ENCODE measurements at regions of chr5 and their contacts with region 1.

Region 1: GRCh38 chr5:146151970-146152369 is 30.5 kb downstream of the LARS1 start:
- DNase-seq: peak in 1 of 2 experiments; percentile 46
- H3K4me3 ChIP-seq: no peak overlapping the region
- H3K27ac ChIP-seq: no peak overlapping the region
- H3K4me1 ChIP-seq: no peaks in the 10 kb centered on the region
- H3K27me3 ChIP-seq: no peaks in the 10 kb centered on the region
- CTCF ChIP-seq: no peak

Region 2: GRCh38 chr5:145951071-145951470 is 200.9 kb before region 1 on chr5:
- CTCF ChIA-PET with region 1: no interaction called
- POLR2A ChIA-PET with region 1: no interaction called
- intact Hi-C with region 1: no loop called
- DNase-seq: no peak
- H3K4me3 ChIP-seq: no peak overlapping the region
- H3K27ac ChIP-seq: no peak overlapping the region
- H3K4me1 ChIP-seq: peaks cover 20% of the 10 kb centered on the region
- H3K27me3 ChIP-seq: no peaks in the 10 kb centered on the region
- CTCF ChIP-seq: no peak

Region 3: DNA sequence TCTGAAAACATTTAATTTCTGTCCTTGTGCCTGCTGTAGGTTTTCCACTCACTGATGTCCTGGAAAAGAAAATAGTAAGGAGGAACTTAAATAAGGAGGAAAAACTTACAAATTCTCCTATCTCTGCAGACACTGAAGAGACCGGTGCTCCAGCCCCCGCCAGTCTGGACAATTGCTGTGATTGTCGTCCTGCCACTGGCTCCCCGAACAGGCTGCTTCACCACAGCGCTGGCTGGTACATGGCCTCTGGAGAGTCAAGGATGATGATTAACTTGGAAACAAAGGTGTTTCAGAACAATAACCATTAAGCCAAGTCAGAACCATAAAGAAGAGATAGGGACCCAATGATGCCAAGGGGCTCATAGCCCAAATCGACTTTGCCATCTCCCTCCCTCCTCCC is 53.9 kb before region 1 on chr5:
- CTCF ChIA-PET with region 1: no interaction called
- POLR2A ChIA-PET with region 1: no interaction called
- intact Hi-C with region 1: no loop called
- DNase-seq: no peak
- H3K4me3 ChIP-seq: no peak overlapping the region
- H3K27ac ChIP-seq: no peak overlapping the region
- H3K4me1 ChIP-seq: no peaks in the 10 kb centered on the region
- H3K27me3 ChIP-seq: no peaks in the 10 kb centered on the region
- CTCF ChIP-seq: no peak

Region 4: DNA sequence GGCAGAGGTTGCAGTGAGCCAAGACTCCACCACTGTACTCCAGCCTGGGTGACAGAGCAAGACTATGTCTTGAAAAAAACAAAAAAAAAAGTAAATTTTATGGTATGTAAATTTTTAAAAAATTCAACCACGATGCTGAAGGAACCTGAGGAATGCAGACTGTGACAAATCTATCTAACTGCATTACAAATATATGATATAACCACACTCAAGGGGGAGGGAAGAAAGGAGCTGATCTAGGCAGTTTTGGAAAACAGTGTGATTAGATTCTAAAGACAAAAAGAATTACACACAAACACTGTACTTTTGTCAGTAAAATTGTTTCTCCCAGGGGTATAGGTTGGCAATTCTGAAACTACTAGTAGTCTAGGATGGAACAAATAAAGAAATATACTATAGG is 13.5 kb after region 1 on chr5:
- CTCF ChIA-PET with region 1: no interaction called
- POLR2A ChIA-PET with region 1: no interaction called
- intact Hi-C with region 1: no loop called
- DNase-seq: no peak
- H3K4me3 ChIP-seq: no peak overlapping the region
- H3K27ac ChIP-seq: no peak overlapping the region
- H3K4me1 ChIP-seq: no peaks in the 10 kb centered on the region
- H3K27me3 ChIP-seq: no peaks in the 10 kb centered on the region
- CTCF ChIP-seq: no peak

Region 5: DNA sequence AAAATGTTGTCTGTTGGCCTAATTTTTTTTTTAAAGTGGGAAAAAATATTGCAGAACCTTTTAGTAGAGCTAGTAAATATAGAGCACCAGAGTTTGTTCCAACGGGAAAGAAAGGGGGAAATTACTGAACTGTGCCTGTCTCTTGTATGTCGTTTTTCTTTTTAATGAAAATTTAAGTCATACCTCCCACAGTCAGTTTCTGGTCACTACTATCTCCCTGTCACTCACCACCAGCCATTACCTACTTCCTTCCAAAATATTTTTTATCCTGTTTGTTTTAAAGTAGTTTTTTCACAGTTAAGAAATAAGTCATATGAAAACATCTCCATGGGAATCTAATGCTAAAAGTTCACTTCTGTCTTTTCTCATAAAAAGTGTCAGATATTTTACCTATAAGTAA is 342.7 kb after region 1 on chr5:
- CTCF ChIA-PET with region 1: interaction called, 12 read pairs
- POLR2A ChIA-PET with region 1: no interaction called
- intact Hi-C with region 1: loop called (anchors 10 kb)
- DNase-seq: no peak
- H3K4me3 ChIP-seq: no peak overlapping the region
- H3K27ac ChIP-seq: no peak overlapping the region
- H3K4me1 ChIP-seq: no peaks in the 10 kb centered on the region
- H3K27me3 ChIP-seq: no peaks in the 10 kb centered on the region
- CTCF ChIP-seq: no peak

Measured in PC-9 (cell line).